CD8-positive, alpha-beta memory T cell (primary cell): ENCODE measurements at regions of chr14 and their contacts with region 1.

Region 1: DNA sequence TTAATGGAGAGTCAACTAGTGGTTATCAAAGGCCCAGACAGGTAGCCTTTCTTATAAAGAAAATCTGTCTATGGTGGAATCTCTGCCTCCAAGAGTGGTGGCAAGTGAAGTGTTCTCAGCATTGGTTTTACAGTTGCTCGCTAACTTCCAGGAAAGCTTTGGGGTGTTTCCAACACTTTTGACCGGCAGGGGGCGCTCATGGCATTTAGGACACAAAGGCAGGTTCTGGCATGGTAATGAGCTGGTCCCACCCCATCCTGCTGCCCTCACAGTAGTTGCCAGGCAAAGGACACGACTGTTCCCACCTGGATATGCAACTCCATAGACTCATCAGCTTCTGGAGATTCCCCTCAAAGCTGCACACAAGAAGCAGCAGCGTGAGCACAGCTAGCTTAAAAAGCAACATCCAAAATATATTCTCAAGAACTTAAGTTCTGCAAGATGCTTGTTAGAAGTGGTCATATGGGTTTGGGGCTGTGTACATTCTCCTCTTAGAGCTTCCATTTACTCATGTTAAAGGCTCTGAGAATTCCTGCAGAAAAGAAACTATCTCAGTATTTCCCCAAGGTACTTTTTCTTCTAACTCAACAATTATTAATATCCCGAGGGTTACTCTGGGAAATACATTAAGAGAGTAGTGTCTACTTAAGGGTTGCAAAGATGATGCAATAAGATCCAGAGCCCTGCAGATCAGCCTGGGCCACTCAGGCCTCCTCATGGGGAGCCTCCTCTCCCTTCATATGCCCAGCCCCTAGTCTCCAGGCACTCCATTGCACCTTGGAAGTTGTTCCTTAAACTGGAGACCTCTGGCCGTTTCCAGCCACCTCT is 14.8 kb downstream of the PROX2 start:
- DNase-seq: peak; percentile 76 to 92 (median 86)
- H3K4me3 ChIP-seq: no peak overlapping the region
- H3K4me3 Mint-ChIP-seq: no peak overlapping the region
- H3K27ac ChIP-seq: no peak overlapping the region
- H3K27ac Mint-ChIP-seq: no peak overlapping the region
- H3K4me1 ChIP-seq: peaks cover 8% of the 10 kb centered on the region
- H3K4me1 Mint-ChIP-seq: peaks cover 4 to 7% (median 6%) of the 10 kb centered on the region in 3 donors
- H3K27me3 ChIP-seq: no peaks in the 10 kb centered on the region
- H3K27me3 Mint-ChIP-seq: peaks cover 0 to 1% of the 10 kb centered on the region in 2 donors

Region 2: GRCh38 chr14:74881431-74882361 is 20.6 kb after region 1 on chr14 and contains the start of gene DLST:
- CTCF ChIA-PET with region 1: interaction called, 125 read pairs
- POLR2A ChIA-PET with region 1: interaction called, 6 read pairs
- DNase-seq: peak; percentile 76 to 89 (median 81)
- H3K4me3 ChIP-seq: peak within 1 kb of the TSS; percentile 92
- H3K4me3 Mint-ChIP-seq: peak within 1 kb of the TSS; percentile 97 to 100 (median 99)
- H3K27ac ChIP-seq: peak within 1 kb of the TSS; percentile 93
- H3K27ac Mint-ChIP-seq: peak within 1 kb of the TSS; percentile 91 to 100 (median 99)
- H3K4me1 ChIP-seq: peaks cover 38% of the 10 kb centered on the region
- H3K4me1 Mint-ChIP-seq: peaks cover 59 to 76% (median 71%) of the 10 kb centered on the region in 3 donors
- H3K27me3 ChIP-seq: no peaks in the 10 kb centered on the region
- H3K27me3 Mint-ChIP-seq: peaks cover 0 to under 1% of the 10 kb centered on the region in 2 donors
- total RNA-seq, gene DLST: 160 to 161 TPM

Region 3: GRCh38 chr14:74905375-74906142 is 44.4 kb after region 1 on chr14:
- CTCF ChIA-PET with region 1: interaction called, 334 read pairs
- POLR2A ChIA-PET with region 1: interaction called, 8 read pairs
- DNase-seq: peak; percentile 61 to 85 (median 71)
- H3K4me3 ChIP-seq: no peak overlapping the region
- H3K4me3 Mint-ChIP-seq: no peak overlapping the region
- H3K27ac ChIP-seq: no peak overlapping the region
- H3K27ac Mint-ChIP-seq: peak overlapping the region; percentile 19 to 90 (median 73)
- H3K4me1 ChIP-seq: no peaks in the 10 kb centered on the region
- H3K4me1 Mint-ChIP-seq: peaks cover 5 to 9% (median 8%) of the 10 kb centered on the region in 3 donors
- H3K27me3 ChIP-seq: no peaks in the 10 kb centered on the region
- H3K27me3 Mint-ChIP-seq: no peaks in the 10 kb centered on the region

Region 4: DNA sequence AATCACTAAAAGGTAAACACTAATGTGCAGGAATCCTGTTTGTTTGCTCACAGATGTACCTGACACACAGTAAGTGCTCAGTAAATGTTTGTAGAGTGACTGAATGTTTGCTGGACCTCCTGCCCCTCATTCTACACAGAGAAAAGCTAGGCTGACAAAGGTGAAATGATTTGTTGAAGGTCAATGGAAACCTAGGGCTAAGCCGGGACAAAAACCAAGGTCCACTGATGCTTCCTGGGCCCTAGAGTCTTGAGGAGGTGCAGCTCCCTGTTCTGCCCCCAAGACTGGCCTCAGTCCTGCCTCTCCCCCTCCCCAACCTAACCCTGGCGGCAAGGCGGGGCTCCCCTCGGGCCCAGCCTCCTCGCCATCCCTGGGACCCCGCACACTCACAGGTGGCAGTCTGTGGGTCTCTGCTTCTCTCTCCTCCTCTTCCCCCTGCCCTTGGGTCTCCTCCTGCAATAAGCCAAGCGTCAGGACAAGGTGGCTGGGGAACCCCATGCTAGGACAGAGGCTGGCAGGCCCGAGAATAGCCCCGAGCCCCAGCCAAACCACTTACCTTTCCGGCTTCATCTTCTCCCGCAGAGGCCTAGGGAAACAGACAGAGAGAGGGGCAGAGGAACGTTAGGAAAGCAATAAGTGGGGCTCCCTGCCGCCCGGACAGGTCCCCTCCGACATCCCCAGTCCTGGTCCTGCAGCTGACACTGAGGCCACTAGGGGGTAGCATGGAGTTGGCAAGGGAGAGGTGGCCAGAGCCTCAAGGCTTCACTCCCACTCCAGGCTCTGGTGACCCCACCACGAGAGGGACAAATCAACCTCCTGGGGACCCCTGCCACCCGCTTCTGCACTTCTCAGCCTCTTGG is 84.9 kb after region 1 on chr14:
- CTCF ChIA-PET with region 1: interaction called, 17 read pairs
- POLR2A ChIA-PET with region 1: no interaction called
- DNase-seq: peak; percentile 55 to 81 (median 60)
- H3K4me3 ChIP-seq: no peak overlapping the region
- H3K4me3 Mint-ChIP-seq: peak overlapping the region in 5 of 7 donors; percentile 33 to 72 (median 49)
- H3K27ac ChIP-seq: no peak overlapping the region
- H3K27ac Mint-ChIP-seq: peak overlapping the region in 7 of 8 donors; percentile 8 to 85 (median 66)
- H3K4me1 ChIP-seq: peaks cover 31% of the 10 kb centered on the region
- H3K4me1 Mint-ChIP-seq: peaks cover 21 to 30% (median 27%) of the 10 kb centered on the region in 3 donors
- H3K27me3 ChIP-seq: no peaks in the 10 kb centered on the region
- H3K27me3 Mint-ChIP-seq: peaks cover 2 to 6% of the 10 kb centered on the region in 2 donors